Panc1 (cell line): ENCODE measurements at regions of chr3 and their contacts with region 1.

Region 1: GRCh38 chr3:33395900-33396299 is 44.3 kb downstream of the UBP1 start:
- DNase-seq: no peak
- ATAC-seq: no peak
- H3K4me3 ChIP-seq: no peak overlapping the region
- H3K27ac ChIP-seq: no peak overlapping the region
- H3K4me1 ChIP-seq: peaks cover 14% of the 10 kb centered on the region
- H3K27me3 ChIP-seq: no peaks in the 10 kb centered on the region
- CTCF ChIP-seq: no peak

Region 2: GRCh38 chr3:32200490-32200889 is 1195.4 kb before region 1 on chr3:
- CTCF ChIA-PET with region 1: no interaction called
- POLR2A ChIA-PET with region 1: no interaction called
- in situ Hi-C with region 1: no loop called
- intact Hi-C with region 1: no loop called
- DNase-seq: no peak
- ATAC-seq: no peak
- H3K4me3 ChIP-seq: no peak overlapping the region
- H3K27ac ChIP-seq: no peak overlapping the region
- H3K4me1 ChIP-seq: no peaks in the 10 kb centered on the region
- H3K27me3 ChIP-seq: no peaks in the 10 kb centered on the region; the same call in 1 of the 2 replicates
- CTCF ChIP-seq: no peak

Region 3: GRCh38 chr3:33417066-33417673 is 21.3 kb after region 1 on chr3:
- CTCF ChIA-PET with region 1: no interaction called
- POLR2A ChIA-PET with region 1: interaction called, 10 read pairs
- in situ Hi-C with region 1: no loop called
- intact Hi-C with region 1: no loop called
- DNase-seq: no peak
- ATAC-seq: no peak
- H3K4me3 ChIP-seq: no peak overlapping the region
- H3K27ac ChIP-seq: no peak overlapping the region
- H3K4me1 ChIP-seq: no peaks in the 10 kb centered on the region
- H3K27me3 ChIP-seq: no peaks in the 10 kb centered on the region
- CTCF ChIP-seq: no peak

Region 4: DNA sequence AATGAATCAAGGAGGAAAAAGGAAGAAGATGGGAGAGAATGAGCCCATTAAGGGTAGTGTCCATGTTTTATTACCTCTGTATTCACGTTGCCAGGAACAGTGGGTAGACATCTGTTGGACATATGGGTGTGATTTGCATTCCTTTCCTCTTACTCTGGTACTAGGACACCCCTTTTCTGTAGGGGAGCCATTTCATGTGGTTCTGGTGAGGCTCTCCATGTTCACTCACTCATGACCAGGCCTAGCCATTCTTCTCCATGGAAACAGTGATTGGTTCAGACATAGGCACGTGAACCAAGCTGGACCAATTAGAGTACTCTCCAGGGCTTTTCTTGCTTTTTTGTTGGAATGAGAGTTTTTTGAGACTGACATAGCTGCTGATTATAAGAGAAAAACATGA is 363.0 kb after region 1 on chr3:
- CTCF ChIA-PET with region 1: no interaction called
- POLR2A ChIA-PET with region 1: interaction called, 14 read pairs
- in situ Hi-C with region 1: no loop called
- intact Hi-C with region 1: no loop called
- DNase-seq: no peak
- ATAC-seq: no peak
- H3K4me3 ChIP-seq: no peak overlapping the region
- H3K27ac ChIP-seq: no peak overlapping the region
- H3K4me1 ChIP-seq: no peaks in the 10 kb centered on the region
- H3K27me3 ChIP-seq: no peaks in the 10 kb centered on the region
- CTCF ChIP-seq: no peak